ENCODE measurements at regions of chr4 and their contacts with region 1.

Region 1: DNA sequence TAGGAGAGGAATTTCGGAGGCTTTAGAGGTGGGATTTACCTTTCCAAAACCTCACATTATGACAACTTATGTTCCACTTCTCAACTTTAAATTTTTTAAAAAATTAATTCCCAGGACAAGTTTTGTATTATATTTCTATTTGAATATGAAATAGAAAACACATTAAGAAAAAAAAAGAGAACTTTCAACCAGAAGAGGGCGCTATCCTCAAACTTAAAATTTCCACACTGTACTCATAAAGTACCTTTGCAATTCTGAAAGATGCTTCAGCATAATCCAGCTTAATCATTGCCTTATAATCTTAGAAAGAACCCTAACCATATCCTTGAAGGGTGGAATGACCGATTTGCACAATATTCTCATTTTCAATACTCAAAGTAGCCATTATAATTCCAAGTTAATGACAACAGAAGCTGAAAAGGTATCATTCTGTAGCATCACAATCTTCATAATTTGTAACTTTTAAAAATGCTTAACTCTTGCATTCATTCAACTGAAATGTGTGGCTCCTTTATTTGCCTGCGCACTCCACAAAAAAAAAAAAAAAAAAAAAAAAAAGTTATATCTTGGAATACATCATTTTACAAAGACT is 158.0 kb downstream of the KCNIP4 start:
- DNase-seq: no peak
- H3K4me3 ChIP-seq: no peak overlapping the region
- H3K27ac ChIP-seq: no peak overlapping the region
- H3K27me3 ChIP-seq: no peaks in the 10 kb centered on the region
- CTCF ChIP-seq: peak; percentile 41; the same call in 1 of the 2 replicates

Region 2: DNA sequence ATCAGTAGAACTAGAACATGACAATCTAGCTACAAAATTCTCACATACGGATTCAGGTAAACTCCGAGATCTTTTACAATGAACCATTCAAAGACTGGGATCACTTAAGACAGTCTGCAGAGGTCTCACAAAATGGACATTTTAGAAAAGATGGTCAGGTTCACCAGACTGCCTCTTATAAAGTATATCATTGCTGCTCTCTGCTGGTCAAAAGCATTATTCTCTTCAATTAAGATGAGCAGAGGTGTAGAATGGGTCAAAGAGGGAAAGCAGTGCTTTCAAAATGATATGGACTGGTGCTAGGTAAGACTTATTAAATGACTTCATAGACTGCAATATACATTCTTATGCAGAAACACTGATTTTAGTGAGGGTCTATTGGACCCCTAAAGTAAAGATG is 655.5 kb before region 1 on chr4:
- CTCF ChIA-PET with region 1: no interaction called
- POLR2A ChIA-PET with region 1: no interaction called
- DNase-seq: no peak
- H3K4me3 ChIP-seq: no peak overlapping the region
- H3K27ac ChIP-seq: no peak overlapping the region
- H3K27me3 ChIP-seq: no peaks in the 10 kb centered on the region
- CTCF ChIP-seq: no peak

Region 3: GRCh38 chr4:21765810-21766407 is 24.6 kb before region 1 on chr4:
- CTCF ChIA-PET with region 1: interaction called, 28 read pairs
- POLR2A ChIA-PET with region 1: no interaction called
- DNase-seq: no peak
- H3K4me3 ChIP-seq: no peak overlapping the region
- H3K27ac ChIP-seq: no peak overlapping the region
- H3K27me3 ChIP-seq: no peaks in the 10 kb centered on the region
- CTCF ChIP-seq: peak; percentile 85

Region 4: DNA sequence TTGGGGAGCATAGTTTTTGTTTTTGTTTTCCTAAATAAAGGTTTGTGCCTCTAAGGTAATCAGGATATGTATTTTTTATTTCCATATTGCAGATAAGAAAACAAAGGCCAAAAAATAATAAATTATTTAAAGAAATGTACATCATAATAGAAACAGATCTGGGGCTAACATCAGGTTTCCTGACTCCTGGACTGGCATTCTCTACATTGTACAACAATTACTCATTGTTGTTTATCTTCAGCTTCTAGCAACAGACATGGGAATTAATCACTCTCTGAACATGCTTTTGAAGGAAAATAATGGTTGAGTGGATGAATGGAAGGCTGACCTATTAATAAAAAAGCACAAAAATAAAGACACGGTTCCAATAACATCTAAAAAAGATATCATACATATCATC is 11.9 kb after region 1 on chr4:
- CTCF ChIA-PET with region 1: interaction called, 29 read pairs
- POLR2A ChIA-PET with region 1: no interaction called
- DNase-seq: no peak
- H3K4me3 ChIP-seq: no peak overlapping the region
- H3K27ac ChIP-seq: no peak overlapping the region
- H3K27me3 ChIP-seq: no peaks in the 10 kb centered on the region
- CTCF ChIP-seq: no peak

Region 5: DNA sequence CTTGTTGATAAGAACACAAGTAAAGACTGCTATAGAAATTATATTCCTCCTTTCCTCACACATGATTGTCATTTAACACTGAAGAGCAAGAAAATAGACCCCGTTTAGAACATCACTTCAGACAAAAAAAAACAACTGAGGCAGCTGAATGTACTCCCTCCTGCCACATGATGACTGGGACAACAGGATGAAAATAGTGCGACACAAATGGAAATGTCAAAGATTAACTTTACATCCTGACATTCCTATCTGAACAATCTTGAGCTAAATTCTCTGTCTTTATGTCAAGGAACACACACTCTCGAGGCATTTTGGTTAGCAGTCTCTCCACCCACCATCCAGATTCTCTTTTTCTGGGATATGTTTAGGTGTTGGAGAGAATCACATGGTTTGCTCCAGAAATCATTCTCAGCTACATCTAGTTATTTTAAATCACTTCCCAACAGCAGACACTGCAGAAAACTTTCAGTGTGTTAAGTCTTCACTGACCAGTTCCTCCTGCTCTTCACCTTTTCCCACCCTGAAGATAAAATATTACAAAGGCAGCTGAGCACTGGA is 174.3 kb after region 1 on chr4:
- CTCF ChIA-PET with region 1: no interaction called
- POLR2A ChIA-PET with region 1: no interaction called
- DNase-seq: no peak
- H3K4me3 ChIP-seq: no peak overlapping the region
- H3K27ac ChIP-seq: no peak overlapping the region
- H3K27me3 ChIP-seq: no peaks in the 10 kb centered on the region
- CTCF ChIP-seq: no peak

Region 6: GRCh38 chr4:22055954-22056353 is 265.4 kb after region 1 on chr4:
- CTCF ChIA-PET with region 1: no interaction called
- POLR2A ChIA-PET with region 1: no interaction called
- DNase-seq: no peak
- H3K4me3 ChIP-seq: no peak overlapping the region
- H3K27ac ChIP-seq: no peak overlapping the region
- H3K27me3 ChIP-seq: no peaks in the 10 kb centered on the region
- CTCF ChIP-seq: no peak

Region 7: GRCh38 chr4:22202246-22202974 is 411.9 kb after region 1 on chr4:
- CTCF ChIA-PET with region 1: no interaction called
- POLR2A ChIA-PET with region 1: no interaction called
- DNase-seq: no peak
- H3K4me3 ChIP-seq: no peak overlapping the region
- H3K27ac ChIP-seq: no peak overlapping the region
- H3K27me3 ChIP-seq: no peaks in the 10 kb centered on the region
- CTCF ChIP-seq: no peak

Region 8: DNA sequence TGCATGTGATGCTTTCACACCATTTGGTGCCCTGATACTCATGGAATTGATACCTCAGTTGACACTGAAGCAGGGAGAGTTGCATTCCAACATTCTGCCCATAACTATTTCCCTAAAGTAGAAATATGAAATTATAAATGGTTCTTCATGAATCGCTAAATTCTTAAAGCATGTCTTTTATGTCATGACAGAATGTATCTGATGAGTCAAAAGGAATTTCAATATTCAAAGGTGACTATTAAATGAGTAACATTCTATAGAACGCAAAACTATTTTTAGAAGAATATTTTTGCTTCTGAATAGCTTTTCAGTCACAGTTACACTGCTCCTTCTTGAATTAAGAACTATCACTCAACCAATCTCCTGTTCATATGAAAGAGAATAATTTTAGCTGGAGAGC is 572.5 kb after region 1 on chr4:
- CTCF ChIA-PET with region 1: interaction called, 42 read pairs
- POLR2A ChIA-PET with region 1: no interaction called
- DNase-seq: no peak
- H3K4me3 ChIP-seq: no peak overlapping the region
- H3K27ac ChIP-seq: no peak overlapping the region
- H3K27me3 ChIP-seq: no peaks in the 10 kb centered on the region
- CTCF ChIP-seq: no peak

Region 9: DNA sequence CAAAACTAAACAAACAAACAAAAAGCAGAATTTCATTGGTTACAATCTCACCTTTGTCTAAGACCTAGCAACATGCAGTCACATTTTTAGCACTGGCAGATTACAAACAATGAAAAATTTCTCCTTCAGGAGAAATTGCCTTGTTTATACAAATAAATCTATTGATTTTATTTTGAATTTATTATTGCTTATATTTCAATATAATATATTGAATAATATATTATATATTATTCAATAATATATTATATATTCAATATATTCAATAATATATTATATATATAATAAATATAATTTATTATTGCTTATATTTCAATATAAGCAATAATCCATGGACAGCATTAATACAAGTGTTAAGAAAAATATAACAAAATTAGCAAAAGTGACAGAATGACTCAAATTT is 593.6 kb after region 1 on chr4:
- CTCF ChIA-PET with region 1: interaction called, 390 read pairs
- POLR2A ChIA-PET with region 1: no interaction called
- DNase-seq: no peak
- H3K4me3 ChIP-seq: no peak overlapping the region
- H3K27ac ChIP-seq: no peak overlapping the region
- H3K27me3 ChIP-seq: no peaks in the 10 kb centered on the region
- CTCF ChIP-seq: no peak

Region 10: GRCh38 chr4:22416403-22416802 is 625.9 kb after region 1 on chr4:
- CTCF ChIA-PET with region 1: interaction called, 14 read pairs
- POLR2A ChIA-PET with region 1: no interaction called
- DNase-seq: no peak
- H3K4me3 ChIP-seq: no peak overlapping the region
- H3K27ac ChIP-seq: no peak overlapping the region
- H3K27me3 ChIP-seq: no peaks in the 10 kb centered on the region
- CTCF ChIP-seq: no peak

Measured in AG04450 (cell line).